Dorsolateral prefrontal cortex (tissue), 120 donors: ENCODE measurements at regions of chr5 and their contacts with region 1.

Region 1: GRCh38 chr5:38680094-38680825 is 123.8 kb upstream of the LIFR start:
- DNase-seq: peak in 3 of 10 donors; percentile 38 to 62 (median 44)
- H3K4me3 ChIP-seq: no peak overlapping the region
- H3K27ac ChIP-seq: peak overlapping the region in 58 of 59 donors; percentile 61 to 99 (median 94)
- H3K27me3 ChIP-seq: no peaks in the 10 kb centered on the region
- CTCF ChIP-seq: peak in 2 of 56 donors; percentile 9 to 27

Region 2: GRCh38 chr5:38709678-38710306 is 29.5 kb after region 1 on chr5:
- intact Hi-C with region 1: loop called in 1 of 2 experiments (anchors 5 kb)
- DNase-seq: no peak
- H3K4me3 ChIP-seq: no peak overlapping the region
- H3K27ac ChIP-seq: peak overlapping the region in 48 of 59 donors; percentile 2 to 75 (median 42)
- H3K27me3 ChIP-seq: no peaks in the 10 kb centered on the region
- CTCF ChIP-seq: no peak

Region 3: DNA sequence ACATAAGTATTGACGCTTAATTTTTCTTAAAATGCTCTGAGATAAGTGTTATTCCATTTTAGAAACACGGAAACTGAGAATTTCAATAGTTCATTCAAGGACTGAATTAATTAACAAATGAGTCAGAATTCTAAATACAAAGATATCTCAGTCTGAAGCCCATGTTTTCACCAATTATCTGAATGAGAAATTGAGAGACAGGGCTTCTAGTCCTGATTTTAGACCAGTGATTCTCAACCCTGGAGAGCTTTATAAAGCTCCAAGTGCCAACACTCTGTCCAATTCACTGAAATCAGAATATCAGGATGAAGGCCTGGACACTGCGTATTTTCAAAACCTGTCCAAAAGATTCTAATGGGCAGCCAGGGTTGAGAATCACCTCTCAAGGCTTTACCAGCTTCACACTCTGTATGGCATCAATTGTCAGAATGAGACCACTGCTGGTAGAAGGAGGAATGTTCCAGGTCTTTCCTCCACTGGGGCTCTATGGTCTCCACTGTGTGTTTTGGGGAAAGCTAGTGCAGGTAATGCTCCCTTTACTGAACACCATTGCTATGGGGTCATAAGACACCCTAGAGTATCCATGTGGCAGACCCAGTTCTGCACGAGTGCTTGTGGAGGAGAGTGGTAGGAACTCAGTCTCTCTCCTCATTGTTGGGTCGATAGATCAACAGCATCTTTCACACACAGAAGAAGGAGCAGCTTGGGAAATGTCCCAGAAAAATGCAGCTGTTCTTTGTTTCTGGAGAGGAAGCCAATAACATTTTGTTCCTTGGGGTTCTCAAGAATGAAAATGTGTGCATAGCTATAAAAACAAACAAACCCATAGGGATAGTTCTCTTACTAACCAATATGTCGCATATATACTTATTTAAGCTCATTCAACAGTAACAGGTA is 65.8 kb after region 1 on chr5:
- intact Hi-C with region 1: loop called (anchors 1 to 2 kb)
- DNase-seq: no peak
- H3K4me3 ChIP-seq: peak overlapping the region in 5 of 59 donors; percentile 9 to 35 (median 15)
- H3K27ac ChIP-seq: peak overlapping the region in 57 of 59 donors; percentile 34 to 95 (median 84)
- H3K27me3 ChIP-seq: no peaks in the 10 kb centered on the region
- CTCF ChIP-seq: peak in 3 of 56 donors; percentile 3 to 7 (median 6)

Region 4: DNA sequence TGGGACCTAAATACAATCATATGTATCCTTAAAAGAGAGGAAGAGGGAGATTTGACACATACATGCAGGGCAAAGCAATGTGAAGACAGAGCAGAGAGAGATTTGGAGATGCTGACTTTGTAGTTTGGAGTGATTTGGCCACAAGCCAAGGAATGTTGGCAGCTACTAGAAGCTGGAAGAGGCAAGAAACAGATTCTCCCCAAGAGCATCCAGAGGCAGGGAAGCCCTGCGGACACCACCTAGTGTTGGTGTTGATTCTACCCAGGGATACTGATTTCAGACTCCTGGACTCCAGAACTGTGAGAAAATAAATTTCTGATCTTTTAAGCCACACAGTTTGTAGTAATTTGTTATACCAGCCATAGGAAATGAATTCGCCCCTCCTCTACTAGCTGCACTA is 100.7 kb after region 1 on chr5:
- intact Hi-C with region 1: loop called in 1 of 2 experiments (anchors 10 kb)
- DNase-seq: peak in 8 of 10 donors; percentile 37 to 58 (median 53)
- H3K4me3 ChIP-seq: no peak overlapping the region
- H3K27ac ChIP-seq: no peak overlapping the region
- H3K27me3 ChIP-seq: no peaks in the 10 kb centered on the region
- CTCF ChIP-seq: peak in 52 of 56 donors; percentile 14 to 71 (median 44)

Region 5: DNA sequence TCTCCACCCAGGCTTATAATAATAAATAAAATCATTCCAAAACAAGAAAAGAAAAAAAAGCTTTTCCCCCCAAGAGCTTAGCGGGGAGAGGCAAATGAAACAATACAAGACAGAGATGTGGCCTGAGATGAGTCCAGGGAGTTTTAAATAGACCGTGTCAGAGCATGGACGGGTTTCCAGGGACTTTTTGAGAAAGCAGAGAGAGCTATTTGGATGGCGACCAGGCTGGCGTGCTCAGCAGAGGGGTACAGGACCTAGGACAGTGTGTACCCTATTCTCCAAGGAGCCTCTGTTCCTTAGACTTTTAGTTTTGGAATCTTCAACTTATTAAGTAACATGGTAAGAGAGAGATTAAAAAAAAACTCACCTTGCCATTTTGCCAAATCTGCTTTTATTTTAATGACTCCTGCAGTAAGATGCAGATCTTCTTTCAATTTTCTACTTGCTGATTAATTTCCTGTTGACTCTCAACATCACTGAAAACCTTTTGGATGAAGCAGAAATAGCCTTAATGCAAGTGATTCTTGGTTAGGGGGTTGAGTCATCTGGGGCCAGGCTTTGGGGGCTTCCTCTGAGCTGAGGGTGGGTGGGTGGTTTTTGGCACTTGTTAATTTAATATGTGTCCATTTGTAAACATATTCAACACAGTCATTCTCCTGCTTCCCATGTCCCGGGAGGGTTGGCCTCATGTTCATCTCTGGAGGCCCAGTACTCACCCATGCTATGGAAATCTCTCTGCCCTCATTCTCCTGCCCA is 115.9 kb after region 1 on chr5:
- intact Hi-C with region 1: no loop called
- DNase-seq: no peak
- H3K4me3 ChIP-seq: no peak overlapping the region
- H3K27ac ChIP-seq: peak overlapping the region in 17 of 59 donors; percentile 12 to 69 (median 38)
- H3K27me3 ChIP-seq: no peaks in the 10 kb centered on the region
- CTCF ChIP-seq: no peak

Region 6: DNA sequence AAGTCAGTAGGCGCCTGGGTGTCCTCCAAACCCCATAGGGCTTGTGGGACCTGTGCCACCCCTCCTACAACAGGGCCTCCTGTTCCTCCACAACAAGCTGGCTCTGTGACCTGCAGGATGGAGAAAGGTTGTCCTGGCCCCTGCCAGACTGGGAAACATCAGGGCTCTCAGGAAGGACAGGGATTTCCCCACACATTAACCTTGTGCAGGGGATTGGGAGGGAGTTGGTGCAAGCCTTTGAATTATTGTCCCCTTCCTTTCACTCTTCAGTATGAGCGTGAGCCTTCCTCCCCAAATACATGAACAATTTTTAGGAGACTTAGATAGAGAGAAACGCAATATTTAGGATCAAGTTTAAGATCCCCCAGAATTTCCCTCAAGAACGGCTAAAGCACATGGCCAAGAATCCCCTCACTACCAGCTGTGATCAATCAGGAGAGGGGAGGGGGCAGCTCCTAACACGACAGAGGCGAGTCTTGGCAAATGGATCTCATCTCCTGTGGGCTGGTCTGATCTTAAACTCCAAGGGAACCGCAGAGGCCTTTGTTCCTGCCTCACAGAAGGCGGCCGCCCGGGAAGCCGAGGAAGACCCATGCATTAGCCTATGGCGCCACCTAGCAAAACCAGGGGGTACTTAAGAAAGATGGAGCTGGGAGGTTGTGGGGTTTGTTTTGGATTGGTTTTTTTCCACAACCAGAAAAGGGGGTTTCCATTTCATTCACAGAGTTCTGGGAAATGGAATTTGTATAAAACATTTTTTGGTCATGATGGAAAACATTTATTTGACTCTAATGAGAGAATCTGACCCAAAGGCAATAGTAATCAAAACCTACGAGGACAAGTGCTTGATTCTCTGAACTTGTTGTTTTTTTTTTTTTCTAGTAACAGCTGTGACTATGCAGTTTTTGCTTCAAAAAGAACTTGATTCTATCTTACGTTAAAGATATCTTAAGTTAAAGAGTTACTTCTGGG is 129.4 kb after region 1 on chr5:
- intact Hi-C with region 1: loop called in 1 of 2 experiments (anchors 5 kb)
- DNase-seq: peak; percentile 68 to 89 (median 82)
- H3K4me3 ChIP-seq: peak overlapping the region in 1 of 59 donors; percentile 9
- H3K27ac ChIP-seq: peak overlapping the region in 11 of 59 donors; percentile 3 to 66 (median 35)
- H3K27me3 ChIP-seq: peaks cover 0 to 5% (median 0%) of the 10 kb centered on the region in 45 donors
- CTCF ChIP-seq: peak; percentile 66 to 97 (median 90)

Region 7: DNA sequence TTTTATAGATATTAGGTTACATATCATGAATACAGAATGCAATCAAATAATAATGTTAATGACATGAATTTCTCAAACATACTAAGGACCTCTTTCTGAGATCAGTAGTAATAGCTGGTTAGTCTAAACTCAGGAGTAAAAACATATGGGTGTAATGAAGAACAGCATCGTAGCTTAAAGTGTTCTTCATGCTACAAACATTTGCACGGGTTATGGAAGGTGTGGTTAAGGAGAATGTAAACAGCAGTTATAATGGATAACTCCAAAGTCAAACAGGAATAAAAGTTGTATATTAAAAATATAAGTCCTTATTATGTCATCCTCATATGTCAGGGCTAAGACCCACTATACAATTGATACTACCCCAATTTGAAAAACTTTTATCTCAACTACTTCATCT is 281.4 kb after region 1 on chr5:
- intact Hi-C with region 1: no loop called
- DNase-seq: no peak
- H3K4me3 ChIP-seq: no peak overlapping the region
- H3K27ac ChIP-seq: no peak overlapping the region
- H3K27me3 ChIP-seq: no peaks in the 10 kb centered on the region
- CTCF ChIP-seq: no peak